ENCODE measurements at regions of chr16 and their contacts with region 1.

Region 1: GRCh38 chr16:52068447-52069074 is 478.4 kb downstream of the TOX3 start:
- DNase-seq: peak; percentile 31
- H3K4me3 Mint-ChIP-seq: no peak overlapping the region
- H3K27ac Mint-ChIP-seq: no peak overlapping the region
- H3K4me1 Mint-ChIP-seq: no peaks in the 10 kb centered on the region
- H3K27me3 Mint-ChIP-seq: peaks cover 88% of the 10 kb centered on the region
- CTCF ChIP-seq: peak; percentile 12

Region 2: DNA sequence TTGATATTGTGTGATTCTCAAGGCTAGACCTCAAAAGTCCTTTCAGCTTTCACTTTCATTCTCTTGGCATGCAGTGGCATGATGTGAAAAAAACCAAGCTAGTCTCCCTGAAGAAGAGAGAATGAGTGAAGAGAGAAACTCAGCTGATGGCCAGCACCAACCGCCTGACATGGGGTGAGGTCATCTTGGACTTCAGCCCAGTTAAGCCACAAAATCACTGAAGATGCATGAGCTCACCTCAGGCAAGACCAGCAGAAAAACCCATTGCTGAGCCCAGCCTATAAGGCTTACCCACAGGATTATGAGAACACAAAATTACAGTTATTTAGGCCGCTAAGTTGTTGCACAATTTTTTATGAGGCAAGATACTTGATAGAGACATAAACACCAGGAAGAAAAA is 18.1 kb before region 1 on chr16:
- CTCF ChIA-PET with region 1: interaction called, 12 read pairs
- POLR2A ChIA-PET with region 1: interaction called, 7 read pairs
- intact Hi-C with region 1: no loop called
- DNase-seq: peak; percentile 76
- H3K4me3 Mint-ChIP-seq: peak overlapping the region; percentile 36
- H3K27ac Mint-ChIP-seq: peak overlapping the region; percentile 84
- H3K4me1 Mint-ChIP-seq: peaks cover 10% of the 10 kb centered on the region
- H3K27me3 Mint-ChIP-seq: peaks cover 14% of the 10 kb centered on the region
- CTCF ChIP-seq: no peak

Region 3: GRCh38 chr16:52056259-52056658 is 12.3 kb before region 1 on chr16:
- CTCF ChIA-PET with region 1: interaction called, 33 read pairs
- POLR2A ChIA-PET with region 1: interaction called, 7 read pairs
- intact Hi-C with region 1: no loop called
- DNase-seq: no peak
- H3K4me3 Mint-ChIP-seq: no peak overlapping the region
- H3K27ac Mint-ChIP-seq: no peak overlapping the region
- H3K4me1 Mint-ChIP-seq: no peaks in the 10 kb centered on the region
- H3K27me3 Mint-ChIP-seq: peaks cover 62% of the 10 kb centered on the region
- CTCF ChIP-seq: no peak

Region 4: GRCh38 chr16:52912565-52913173 is 844.1 kb after region 1 on chr16:
- CTCF ChIA-PET with region 1: interaction called, 76 read pairs
- POLR2A ChIA-PET with region 1: no interaction called
- intact Hi-C with region 1: loop called (anchors 1 kb)
- DNase-seq: peak; percentile 78
- H3K4me3 Mint-ChIP-seq: no peak overlapping the region
- H3K27ac Mint-ChIP-seq: no peak overlapping the region
- H3K4me1 Mint-ChIP-seq: no peaks in the 10 kb centered on the region
- H3K27me3 Mint-ChIP-seq: peaks cover 30% of the 10 kb centered on the region
- CTCF ChIP-seq: peak; percentile 82

Region 5: DNA sequence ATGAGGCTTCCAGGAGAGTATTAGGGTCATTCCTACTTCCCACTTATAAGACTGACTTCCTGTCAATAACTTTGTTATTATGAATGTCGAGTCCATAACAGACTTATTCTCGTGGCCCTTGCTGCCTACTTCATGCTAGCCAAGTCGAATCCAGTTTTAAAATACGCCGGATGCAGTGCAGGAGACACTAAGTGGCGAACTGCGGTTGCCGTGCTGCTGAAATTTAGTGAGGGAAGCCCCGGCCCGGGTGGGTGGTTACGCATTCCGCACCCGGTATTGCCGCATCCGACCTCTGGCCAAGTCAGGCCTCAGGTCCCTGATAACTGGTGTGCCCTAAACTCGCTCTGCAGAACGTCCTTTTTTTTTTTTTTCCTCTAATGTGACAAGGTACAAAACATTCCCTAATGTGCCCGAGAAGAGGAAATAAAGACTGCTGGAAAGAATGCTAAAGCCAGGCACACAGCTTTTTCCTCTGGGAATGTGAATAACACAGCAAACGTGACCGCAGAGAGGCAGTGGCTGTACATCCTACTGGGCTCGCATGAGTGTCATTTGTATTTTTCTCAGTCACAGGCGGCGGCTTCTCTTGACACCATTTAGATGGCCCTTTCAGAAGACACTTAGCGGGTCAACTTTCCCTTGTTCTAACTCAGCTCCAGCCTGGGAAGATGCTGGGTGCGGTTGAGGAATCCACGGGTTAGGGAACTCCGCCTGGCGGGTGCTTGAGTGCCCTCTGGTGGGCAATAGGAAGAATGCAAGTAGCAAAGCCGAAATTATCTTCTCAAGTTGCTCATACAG is 1441.5 kb after region 1 on chr16:
- CTCF ChIA-PET with region 1: no interaction called
- POLR2A ChIA-PET with region 1: no interaction called
- intact Hi-C with region 1: loop called (anchors 2 kb)
- DNase-seq: peak; percentile 63
- H3K4me3 Mint-ChIP-seq: no peak overlapping the region
- H3K27ac Mint-ChIP-seq: no peak overlapping the region
- H3K4me1 Mint-ChIP-seq: no peaks in the 10 kb centered on the region
- H3K27me3 Mint-ChIP-seq: no peaks in the 10 kb centered on the region
- CTCF ChIP-seq: peak; percentile 79

Measured in MCF 10A (cell line).